Common myeloid progenitor, CD34-positive (primary cell): ENCODE measurements at regions of chr1 and their contacts with region 1.

Region 1: GRCh38 chr1:160085686-160086455 is 4.5 kb downstream of the KCNJ9 start:
- DNase-seq: peak; percentile 81 to 86 (median 81)
- H3K4me3 ChIP-seq: no peak overlapping the region
- H3K27ac ChIP-seq: no peak overlapping the region
- H3K4me1 ChIP-seq: peaks cover 0 to 9% (median 7%) of the 10 kb centered on the region in 4 experiments
- H3K27me3 ChIP-seq: peaks cover 1 to 36% (median 23%) of the 10 kb centered on the region in 5 experiments

Region 2: GRCh38 chr1:160070243-160071163 is 15.4 kb before region 1 on chr1:
- CTCF ChIA-PET with region 1: interaction called, 67 read pairs
- POLR2A ChIA-PET with region 1: no interaction called
- DNase-seq: peak; percentile 65 to 84 (median 79)
- H3K4me3 ChIP-seq: peak overlapping the region; percentile 32 to 93 (median 77)
- H3K27ac ChIP-seq: no peak overlapping the region
- H3K4me1 ChIP-seq: peaks cover 6 to 13% (median 8%) of the 10 kb centered on the region in 4 experiments
- H3K27me3 ChIP-seq: peaks cover 6 to 30% (median 23%) of the 10 kb centered on the region in 5 experiments

Region 3: DNA sequence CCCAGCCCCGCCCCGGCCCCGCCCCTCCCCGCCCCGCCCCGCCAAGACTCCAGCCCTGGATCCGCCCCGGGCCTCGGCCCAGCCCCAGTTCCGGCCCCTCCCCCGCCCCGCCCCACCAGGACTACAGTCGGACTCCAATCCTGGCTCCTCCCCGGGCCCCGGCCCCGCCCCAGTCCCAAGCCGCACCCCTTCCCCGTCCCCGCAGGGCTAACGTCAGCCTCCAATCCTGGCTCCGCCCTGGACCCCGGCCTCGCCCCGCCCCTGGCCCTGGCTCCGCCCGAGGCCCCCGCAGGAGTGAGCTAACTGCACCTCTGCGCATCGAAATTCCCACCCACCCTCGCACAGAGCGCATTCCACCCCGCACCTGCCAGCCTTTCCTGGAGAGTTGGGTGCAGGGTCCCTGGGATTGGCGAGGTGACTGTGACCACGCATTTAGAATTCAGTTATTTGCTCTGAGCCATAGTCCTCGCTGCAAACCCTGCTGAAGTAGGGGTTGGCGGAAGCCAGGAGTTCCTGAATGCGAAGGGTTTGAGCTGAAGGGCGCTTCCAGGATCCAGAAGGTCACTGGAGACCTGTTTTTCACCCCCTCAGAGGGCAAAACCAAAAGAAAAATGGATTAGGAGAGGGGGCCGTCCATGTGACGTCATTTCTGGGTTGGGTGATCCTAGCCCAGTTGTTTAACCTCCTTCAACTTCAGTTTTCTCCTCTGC is 13.1 kb after region 1 on chr1:
- CTCF ChIA-PET with region 1: interaction called, 61 read pairs
- POLR2A ChIA-PET with region 1: interaction called, 3 read pairs
- DNase-seq: peak; percentile 92 to 96 (median 95)
- H3K4me3 ChIP-seq: peak overlapping the region; percentile 37 to 89 (median 71)
- H3K27ac ChIP-seq: peak overlapping the region; percentile 41 to 87
- H3K4me1 ChIP-seq: peaks cover 0 to 48% (median 35%) of the 10 kb centered on the region in 4 experiments
- H3K27me3 ChIP-seq: no peaks in the 10 kb centered on the region

Region 4: DNA sequence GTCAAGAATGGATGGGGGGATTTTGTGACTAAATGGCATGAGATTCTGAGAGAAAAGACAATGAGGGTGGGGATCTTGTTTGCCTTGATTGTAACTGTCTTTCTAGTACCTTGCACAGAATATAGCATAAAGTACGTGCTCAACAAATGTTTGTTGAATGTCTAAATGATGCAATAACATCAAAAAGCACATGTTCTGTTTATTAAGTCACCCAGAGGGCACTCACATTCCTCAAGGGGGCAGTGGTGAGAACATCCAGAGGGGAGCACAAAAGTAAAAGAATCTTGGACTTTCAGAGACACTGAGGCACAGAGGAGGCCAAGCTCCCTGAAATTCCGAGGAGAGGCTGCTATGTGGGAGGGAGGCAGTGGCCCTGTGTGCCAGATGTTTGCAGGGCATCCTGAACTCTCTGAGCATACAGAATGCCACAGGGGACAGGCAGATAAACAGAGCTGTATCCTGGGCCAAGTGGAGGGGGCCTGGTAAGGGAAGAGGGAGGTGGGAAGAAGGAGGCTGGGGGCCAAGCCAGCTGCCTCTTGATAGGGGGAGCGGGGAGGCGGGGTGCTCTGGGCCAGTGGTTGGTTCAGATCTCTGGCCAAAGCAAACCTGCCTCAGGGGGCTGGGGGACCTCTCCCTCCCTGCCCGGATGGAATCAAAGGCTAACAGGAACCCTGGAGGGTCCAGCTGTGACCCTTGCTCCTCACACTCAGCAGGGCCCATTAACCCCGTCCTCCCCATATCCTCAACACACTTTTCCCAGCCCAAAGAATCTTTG is 23.2 kb after region 1 on chr1:
- CTCF ChIA-PET with region 1: interaction called, 11 read pairs
- POLR2A ChIA-PET with region 1: no interaction called
- DNase-seq: peak; percentile 38 to 73 (median 68)
- H3K4me3 ChIP-seq: no peak overlapping the region
- H3K27ac ChIP-seq: no peak overlapping the region
- H3K4me1 ChIP-seq: peaks cover 0 to 8% (median 0%) of the 10 kb centered on the region in 4 experiments
- H3K27me3 ChIP-seq: no peaks in the 10 kb centered on the region